A673 (cell line): ENCODE measurements at regions of chr1 and their contacts with region 1.

Region 1: DNA sequence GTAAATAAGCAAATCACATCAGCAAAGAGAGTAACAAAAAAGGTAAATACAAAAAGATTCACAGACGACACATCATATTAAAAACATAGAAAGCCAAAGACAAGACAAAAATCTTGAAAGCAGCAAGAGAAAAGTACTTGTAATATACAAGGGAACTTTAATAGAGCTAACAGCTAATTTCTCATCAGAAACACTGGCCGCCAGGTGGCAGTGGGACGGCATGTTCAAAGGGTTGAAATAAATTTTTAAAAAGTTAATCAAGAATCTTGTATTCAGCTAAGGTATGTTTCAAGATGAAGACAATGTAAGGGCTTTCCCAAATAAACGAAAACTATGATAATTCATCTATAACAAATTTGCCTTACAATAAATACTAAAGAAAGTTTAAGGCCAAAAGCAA is 358.1 kb downstream of the LRRIQ3 start:
- DNase-seq: peak; percentile 43
- H3K4me3 ChIP-seq: no peak overlapping the region
- H3K27ac ChIP-seq: no peak overlapping the region
- H3K4me1 ChIP-seq: no peaks in the 10 kb centered on the region
- H3K27me3 ChIP-seq: no peaks in the 10 kb centered on the region
- CTCF ChIP-seq: peak; percentile 66

Region 2: GRCh38 chr1:73998348-73998959 is 158.5 kb after region 1 on chr1:
- CTCF ChIA-PET with region 1: interaction called, 4 read pairs
- POLR2A ChIA-PET with region 1: no interaction called
- intact Hi-C with region 1: loop called (anchors 1 kb)
- DNase-seq: peak; percentile 68
- H3K4me3 ChIP-seq: no peak overlapping the region
- H3K27ac ChIP-seq: no peak overlapping the region
- H3K4me1 ChIP-seq: no peaks in the 10 kb centered on the region
- H3K27me3 ChIP-seq: no peaks in the 10 kb centered on the region
- CTCF ChIP-seq: peak; percentile 60

Region 3: GRCh38 chr1:74145086-74145485 is 305.2 kb after region 1 on chr1:
- CTCF ChIA-PET with region 1: no interaction called
- POLR2A ChIA-PET with region 1: no interaction called
- intact Hi-C with region 1: no loop called
- DNase-seq: no peak
- H3K4me3 ChIP-seq: no peak overlapping the region
- H3K27ac ChIP-seq: no peak overlapping the region
- H3K4me1 ChIP-seq: no peaks in the 10 kb centered on the region
- H3K27me3 ChIP-seq: no peaks in the 10 kb centered on the region
- CTCF ChIP-seq: no peak

Region 4: DNA sequence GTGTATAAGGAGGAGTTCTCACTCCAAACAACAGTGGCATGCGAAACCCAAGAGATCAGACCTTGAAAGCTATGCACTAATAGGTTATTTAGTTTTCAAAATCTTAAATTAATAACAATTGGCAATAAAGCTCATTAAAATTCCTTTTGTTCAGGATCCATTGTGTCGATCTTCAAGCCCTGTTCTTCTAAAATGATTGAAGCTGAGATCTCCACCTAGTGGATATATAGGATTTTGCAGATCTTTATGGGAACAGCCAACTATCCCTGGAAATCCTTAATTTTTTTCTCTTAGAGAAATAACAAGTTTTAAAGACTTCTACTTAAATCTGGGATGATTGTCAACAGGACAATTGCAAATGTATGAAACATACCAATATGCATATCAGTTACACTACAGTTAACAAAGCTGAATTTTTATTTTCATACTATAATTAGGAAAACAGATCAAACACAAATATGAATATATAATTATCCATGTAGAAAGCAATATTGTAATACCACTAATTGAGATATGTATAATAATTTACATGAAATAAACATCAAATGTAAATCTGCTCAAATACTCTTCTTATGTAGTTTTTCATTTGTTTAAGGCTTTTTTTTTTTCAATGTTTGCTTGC is 629.2 kb after region 1 on chr1:
- CTCF ChIA-PET with region 1: no interaction called
- POLR2A ChIA-PET with region 1: no interaction called
- intact Hi-C with region 1: loop called (anchors 2 kb)
- DNase-seq: peak; percentile 62
- H3K4me3 ChIP-seq: no peak overlapping the region
- H3K27ac ChIP-seq: no peak overlapping the region
- H3K4me1 ChIP-seq: no peaks in the 10 kb centered on the region
- H3K27me3 ChIP-seq: peaks cover 21% of the 10 kb centered on the region
- CTCF ChIP-seq: peak; percentile 70

Region 5: GRCh38 chr1:74689621-74690363 is 849.9 kb after region 1 on chr1:
- CTCF ChIA-PET with region 1: no interaction called
- POLR2A ChIA-PET with region 1: no interaction called
- intact Hi-C with region 1: loop called (anchors 5 kb)
- DNase-seq: peak; percentile 65
- H3K4me3 ChIP-seq: no peak overlapping the region
- H3K27ac ChIP-seq: no peak overlapping the region
- H3K4me1 ChIP-seq: no peaks in the 10 kb centered on the region
- H3K27me3 ChIP-seq: no peaks in the 10 kb centered on the region
- CTCF ChIP-seq: peak; percentile 82